IMR-90 (cell line): ENCODE measurements at regions of chr17 and their contacts with region 1.

Region 1: GRCh38 chr17:69567130-69567529 is 152.6 kb downstream of the MAP2K6 start:
- DNase-seq: peak; percentile 31
- ATAC-seq: 0 out of 2 replicates have a peak, but pooled peaks have one; percentile 32
- H3K4me3 ChIP-seq: no peak overlapping the region
- H3K27ac ChIP-seq: no peak overlapping the region
- H3K4me1 ChIP-seq: no peaks in the 10 kb centered on the region; the same call in 1 of the 2 replicates
- H3K27me3 ChIP-seq: no peaks in the 10 kb centered on the region; the same call in 1 of the 2 replicates
- CTCF ChIP-seq: no peak
- POLR2A ChIP-seq: no peak
- RAD21 ChIP-seq: no peak

Region 2: DNA sequence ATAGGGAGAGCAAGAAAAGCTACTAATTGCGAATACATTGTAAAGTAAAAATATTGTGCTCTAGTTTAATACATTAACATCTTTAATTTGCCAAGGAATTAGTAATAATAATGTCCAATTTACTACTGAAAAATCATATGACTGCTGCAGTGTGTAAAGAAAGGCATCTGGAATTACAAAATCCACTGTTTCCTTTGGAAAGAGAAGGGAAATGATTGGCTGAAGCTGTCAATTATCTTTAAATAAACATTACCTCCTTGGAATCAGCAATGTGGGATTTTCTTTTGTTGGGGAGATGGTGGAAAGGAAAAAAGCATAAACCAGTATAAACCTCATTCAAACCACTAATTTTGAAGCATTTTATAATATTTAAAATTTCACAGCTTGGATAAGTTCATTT is 123.4 kb after region 1 on chr17:
- CTCF ChIA-PET with region 1: no interaction called
- POLR2A ChIA-PET with region 1: no interaction called
- dilution Hi-C with region 1: no loop called
- in situ Hi-C with region 1: no loop called
- intact Hi-C with region 1: no loop called
- DNase-seq: no peak
- ATAC-seq: no peak
- H3K4me3 ChIP-seq: no peak overlapping the region
- H3K27ac ChIP-seq: no peak overlapping the region
- H3K4me1 ChIP-seq: no peaks in the 10 kb centered on the region
- H3K27me3 ChIP-seq: no peaks in the 10 kb centered on the region
- CTCF ChIP-seq: no peak
- POLR2A ChIP-seq: no peak
- RAD21 ChIP-seq: no peak

Region 3: GRCh38 chr17:70144260-70144846 is 577.2 kb after region 1 on chr17:
- CTCF ChIA-PET with region 1: interaction called, 5 read pairs
- POLR2A ChIA-PET with region 1: no interaction called
- dilution Hi-C with region 1: no loop called
- in situ Hi-C with region 1: loop called (anchors 10 kb)
- intact Hi-C with region 1: loop called (anchors 1 kb)
- DNase-seq: peak; percentile 54
- ATAC-seq: peak; percentile 51
- H3K4me3 ChIP-seq: no peak overlapping the region
- H3K27ac ChIP-seq: no peak overlapping the region
- H3K4me1 ChIP-seq: no peaks in the 10 kb centered on the region
- H3K27me3 ChIP-seq: no peaks in the 10 kb centered on the region
- CTCF ChIP-seq: peak; percentile 70
- POLR2A ChIP-seq: no peak
- RAD21 ChIP-seq: peak; percentile 74

Region 4: GRCh38 chr17:70552230-70552981 is 985.3 kb after region 1 on chr17:
- CTCF ChIA-PET with region 1: interaction called, 6 read pairs
- POLR2A ChIA-PET with region 1: no interaction called
- dilution Hi-C with region 1: no loop called
- in situ Hi-C with region 1: loop called (anchors 10 kb)
- intact Hi-C with region 1: loop called (anchors 10 kb)
- DNase-seq: peak; percentile 49
- ATAC-seq: peak; percentile 76
- H3K4me3 ChIP-seq: no peak overlapping the region
- H3K27ac ChIP-seq: no peak overlapping the region
- H3K4me1 ChIP-seq: no peaks in the 10 kb centered on the region; the same call in 1 of the 2 replicates
- H3K27me3 ChIP-seq: no peaks in the 10 kb centered on the region
- CTCF ChIP-seq: peak; percentile 59
- POLR2A ChIP-seq: no peak
- RAD21 ChIP-seq: peak; percentile 60

Region 5: GRCh38 chr17:70622368-70623260 is 1055.5 kb after region 1 on chr17:
- CTCF ChIA-PET with region 1: no interaction called
- POLR2A ChIA-PET with region 1: no interaction called
- dilution Hi-C with region 1: no loop called
- in situ Hi-C with region 1: no loop called
- intact Hi-C with region 1: loop called (anchors 5 kb)
- DNase-seq: peak; percentile 18
- ATAC-seq: peak; percentile 63
- H3K4me3 ChIP-seq: no peak overlapping the region
- H3K27ac ChIP-seq: no peak overlapping the region
- H3K4me1 ChIP-seq: no peaks in the 10 kb centered on the region
- H3K27me3 ChIP-seq: no peaks in the 10 kb centered on the region; the same call in none of the 2 replicates
- CTCF ChIP-seq: peak; percentile 36
- POLR2A ChIP-seq: no peak
- RAD21 ChIP-seq: peak; percentile 42; the same call in 1 of the 2 replicates